H1 (cell line): ENCODE measurements at regions of chr17 and their contacts with region 1.

Region 1: DNA sequence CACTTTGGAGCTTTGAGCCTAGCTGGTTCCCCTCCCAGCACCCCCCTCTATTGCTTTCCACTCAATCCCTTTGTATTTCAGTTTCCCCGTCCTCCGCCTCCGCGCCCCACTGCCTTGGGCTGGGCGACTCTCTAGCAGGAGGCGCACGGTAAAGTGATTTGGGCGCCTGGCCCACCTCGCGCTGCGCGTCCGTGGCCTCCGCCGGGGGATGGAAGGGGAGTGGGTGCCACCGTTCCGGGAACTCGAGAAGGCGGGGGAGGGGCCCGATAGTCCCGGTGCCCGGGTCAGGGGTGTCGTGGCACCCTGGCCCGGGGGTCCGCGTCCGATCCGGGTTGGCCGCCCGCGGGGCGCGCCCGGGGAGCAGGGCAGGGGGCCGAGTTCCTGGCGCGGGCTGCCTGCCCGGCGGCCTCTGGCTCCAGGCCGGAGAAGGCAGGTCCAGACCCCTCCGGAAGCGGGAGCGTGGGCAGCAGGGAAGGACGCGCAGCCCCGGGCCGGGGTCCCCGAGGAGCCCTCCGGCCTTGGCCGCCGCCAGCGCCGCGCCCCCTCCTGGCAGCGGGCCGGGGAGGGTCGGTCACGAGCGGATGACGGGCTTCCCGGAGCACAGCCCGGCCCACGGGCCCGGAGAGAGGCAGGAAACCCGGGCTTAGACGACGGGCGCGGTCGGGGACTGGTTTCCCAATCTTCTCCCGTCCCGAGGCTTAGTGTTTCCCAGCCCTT is 15.8 kb downstream of the MEOX1 start:
- DNase-seq: peak in 1 of 2 experiments; percentile 78
- H3K4me3 ChIP-seq: peak overlapping the region; percentile 26 to 71 (median 44); a peak in 7 of 8 replicates
- H3K27ac ChIP-seq: no peak overlapping the region
- H3K4me1 ChIP-seq: peaks cover 0 to 6% (median 2%) of the 10 kb centered on the region in 4 experiments; a peak in 2 of 7 replicates
- H3K27me3 ChIP-seq: peaks cover 0 to 20% (median 6%) of the 10 kb centered on the region in 4 experiments; a peak in 4 of 7 replicates
- CTCF ChIP-seq: peak; percentile 6 to 48 (median 48); a peak in 3 of 4 replicates
- EP300 ChIP-seq: no peak
- POLR2A ChIP-seq: no peak
- RAD21 ChIP-seq: peak; percentile 11 to 48; a peak in 2 of 4 replicates

Region 2: GRCh38 chr17:43631429-43631828 is 14.5 kb before region 1 on chr17:
- CTCF ChIA-PET with region 1: interaction called, 10 read pairs
- POLR2A ChIA-PET with region 1: no interaction called
- DNase-seq: no peak
- H3K4me3 ChIP-seq: no peak overlapping the region
- H3K27ac ChIP-seq: no peak overlapping the region
- H3K4me1 ChIP-seq: peaks cover 0 to 8% (median 3%) of the 10 kb centered on the region in 4 experiments; a peak in 5 of 7 replicates
- H3K27me3 ChIP-seq: no peaks in the 10 kb centered on the region
- CTCF ChIP-seq: no peak
- EP300 ChIP-seq: no peak
- POLR2A ChIP-seq: no peak
- RAD21 ChIP-seq: no peak

Region 3: GRCh38 chr17:43661699-43662412 is 15.9 kb after region 1 on chr17 and contains the start of gene MEOX1:
- CTCF ChIA-PET with region 1: interaction called, 9 read pairs
- POLR2A ChIA-PET with region 1: interaction called, 11 read pairs
- DNase-seq: no peak
- H3K4me3 ChIP-seq: no peak within 1 kb of the TSS
- H3K27ac ChIP-seq: no peak within 1 kb of the TSS
- H3K4me1 ChIP-seq: peaks cover 3 to 26% (median 16%) of the 10 kb centered on the region in 4 experiments; a peak in 5 of 7 replicates
- H3K27me3 ChIP-seq: no peaks in the 10 kb centered on the region; a peak in 1 of 7 replicates
- CTCF ChIP-seq: no peak
- EP300 ChIP-seq: no peak
- POLR2A ChIP-seq: no peak
- RAD21 ChIP-seq: no peak
- total RNA-seq, gene MEOX1: not detected in 2 replicates